ENCODE measurements at regions of chr11 and their contacts with region 1.

Region 1: GRCh38 chr11:82718307-82718706 is 15.4 kb downstream of the FAM181B start:
- DNase-seq: peak in 1 of 5 donors; percentile 29
- ATAC-seq: peak; percentile 57 to 78 (median 68)
- H3K4me3 ChIP-seq: no peak overlapping the region
- H3K27ac ChIP-seq: no peak overlapping the region
- H3K4me1 ChIP-seq: peaks cover 0 to 18% (median 4%) of the 10 kb centered on the region in 12 donors
- H3K27me3 ChIP-seq: peaks cover 0 to 7% (median 0%) of the 10 kb centered on the region in 9 donors
- CTCF ChIP-seq: peak; percentile 49 to 80 (median 68)
- POLR2A ChIP-seq: no peak

Region 2: DNA sequence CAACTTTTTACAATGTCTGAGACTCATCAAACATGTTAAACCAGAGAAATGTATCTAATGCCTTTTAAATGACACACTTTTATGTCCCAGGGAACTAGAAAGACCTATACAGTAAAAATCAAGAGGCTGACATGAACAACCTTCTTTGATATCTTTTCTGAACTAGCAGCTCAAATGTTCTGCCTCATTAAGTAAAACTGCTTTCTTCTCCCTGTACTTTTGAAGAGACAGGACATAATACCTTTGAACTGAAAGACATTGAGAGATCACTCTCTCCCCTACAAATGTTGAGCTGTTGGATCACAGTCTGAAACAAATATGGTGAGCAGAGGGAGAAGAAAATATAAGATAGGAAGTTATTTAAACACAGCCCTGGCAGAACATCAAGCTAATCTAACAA is 107.6 kb before region 1 on chr11:
- intact Hi-C with region 1: no loop called
- DNase-seq: no peak
- ATAC-seq: no peak
- H3K4me3 ChIP-seq: no peak overlapping the region
- H3K27ac ChIP-seq: no peak overlapping the region
- H3K4me1 ChIP-seq: no peaks in the 10 kb centered on the region
- H3K27me3 ChIP-seq: peaks cover 0 to 3% (median 0%) of the 10 kb centered on the region in 9 donors
- CTCF ChIP-seq: no peak
- POLR2A ChIP-seq: no peak

Region 3: GRCh38 chr11:82867495-82868082 is 149.3 kb after region 1 on chr11:
- intact Hi-C with region 1: loop called in 8 of 10 experiments (anchors 1 to 10 kb)
- DNase-seq: peak in 4 of 5 donors; percentile 58 to 84 (median 74)
- ATAC-seq: peak in 3 of 4 donors; percentile 54 to 62 (median 55)
- H3K4me3 ChIP-seq: peak overlapping the region in 7 of 12 donors; percentile 7 to 38 (median 31)
- H3K27ac ChIP-seq: no peak overlapping the region
- H3K4me1 ChIP-seq: peaks cover 0 to 48% (median 21%) of the 10 kb centered on the region in 12 donors
- H3K27me3 ChIP-seq: no peaks in the 10 kb centered on the region
- CTCF ChIP-seq: peak; percentile 60 to 84 (median 76)
- POLR2A ChIP-seq: no peak

Region 4: GRCh38 chr11:82927254-82927880 is 209.1 kb after region 1 on chr11:
- intact Hi-C with region 1: loop called in 1 of 10 experiments (anchors 1 kb)
- DNase-seq: no peak
- ATAC-seq: peak in 2 of 4 donors; percentile 41 to 64
- H3K4me3 ChIP-seq: no peak overlapping the region
- H3K27ac ChIP-seq: no peak overlapping the region
- H3K4me1 ChIP-seq: peaks cover 0 to 12% (median 0%) of the 10 kb centered on the region in 12 donors
- H3K27me3 ChIP-seq: no peaks in the 10 kb centered on the region
- CTCF ChIP-seq: peak; percentile 69 to 90 (median 86)
- POLR2A ChIP-seq: no peak

Region 5: GRCh38 chr11:83241291-83241946 is 523.1 kb after region 1 on chr11:
- intact Hi-C with region 1: loop called in 3 of 10 experiments (anchors 10 kb)
- DNase-seq: peak in 2 of 5 donors; percentile 41 to 52
- ATAC-seq: peak in 3 of 4 donors; percentile 62 to 88 (median 79)
- H3K4me3 ChIP-seq: no peak overlapping the region
- H3K27ac ChIP-seq: no peak overlapping the region
- H3K4me1 ChIP-seq: no peaks in the 10 kb centered on the region
- H3K27me3 ChIP-seq: no peaks in the 10 kb centered on the region
- CTCF ChIP-seq: peak; percentile 31 to 69 (median 49)
- POLR2A ChIP-seq: no peak

Region 6: GRCh38 chr11:83249972-83250593 is 531.8 kb after region 1 on chr11:
- intact Hi-C with region 1: loop called in 7 of 10 experiments (anchors 5 to 10 kb)
- DNase-seq: no peak
- ATAC-seq: peak in 1 of 4 donors; percentile 56
- H3K4me3 ChIP-seq: no peak overlapping the region
- H3K27ac ChIP-seq: no peak overlapping the region
- H3K4me1 ChIP-seq: no peaks in the 10 kb centered on the region
- H3K27me3 ChIP-seq: no peaks in the 10 kb centered on the region
- CTCF ChIP-seq: peak; percentile 44 to 83 (median 65)
- POLR2A ChIP-seq: no peak

Region 7: GRCh38 chr11:83827940-83828554 is 1109.7 kb after region 1 on chr11:
- intact Hi-C with region 1: loop called in 1 of 10 experiments (anchors 10 kb)
- DNase-seq: no peak
- ATAC-seq: peak in 2 of 4 donors; percentile 34 to 49
- H3K4me3 ChIP-seq: peak overlapping the region in 5 of 12 donors; percentile 8 to 50 (median 34)
- H3K27ac ChIP-seq: no peak overlapping the region
- H3K4me1 ChIP-seq: peaks cover 0 to 5% (median 0%) of the 10 kb centered on the region in 12 donors
- H3K27me3 ChIP-seq: no peaks in the 10 kb centered on the region
- CTCF ChIP-seq: peak; percentile 25 to 67 (median 52)
- POLR2A ChIP-seq: no peak